CD4-positive, alpha-beta memory T cell (primary cell): ENCODE measurements at regions of chr12 and their contacts with region 1.

Region 1: GRCh38 chr12:53791735-53792326 is 40.1 kb upstream of the CISTR start:
- DNase-seq: peak in 3 of 5 donors; percentile 13 to 17 (median 16)
- H3K4me3 ChIP-seq: no peak overlapping the region
- H3K4me3 Mint-ChIP-seq: no peak overlapping the region
- H3K27ac ChIP-seq: no peak overlapping the region
- H3K27ac Mint-ChIP-seq: no peak overlapping the region
- H3K4me1 ChIP-seq: no peaks in the 10 kb centered on the region
- H3K4me1 Mint-ChIP-seq: no peaks in the 10 kb centered on the region
- H3K27me3 ChIP-seq: peaks cover 4% of the 10 kb centered on the region
- H3K27me3 Mint-ChIP-seq: peaks cover 10 to 11% of the 10 kb centered on the region in 2 donors

Region 2: GRCh38 chr12:53984901-53985709 is 193.3 kb after region 1 on chr12 and contains the start of gene HOXC10:
- CTCF ChIA-PET with region 1: interaction called, 4 read pairs
- POLR2A ChIA-PET with region 1: no interaction called
- intact Hi-C with region 1: loop called (anchors 1 kb)
- DNase-seq: peak in 4 of 5 donors; percentile 42 to 73 (median 45)
- H3K4me3 ChIP-seq: no peak within 1 kb of the TSS
- H3K4me3 Mint-ChIP-seq: peak within 1 kb of the TSS; percentile 48 to 88 (median 70)
- H3K27ac ChIP-seq: no peak within 1 kb of the TSS
- H3K27ac Mint-ChIP-seq: peak within 1 kb of the TSS in 5 of 7 donors; percentile 42 to 93 (median 75)
- H3K4me1 ChIP-seq: peaks cover 36% of the 10 kb centered on the region
- H3K4me1 Mint-ChIP-seq: peaks cover 15 to 57% (median 29%) of the 10 kb centered on the region in 4 donors
- H3K27me3 ChIP-seq: peaks cover 94% of the 10 kb centered on the region
- H3K27me3 Mint-ChIP-seq: peaks cover 76 to 82% of the 10 kb centered on the region in 2 donors
- total RNA-seq, gene HOXC10: not detected